Activated naive CD4-positive, alpha-beta T cell treated with anti-CD3 and anti-CD28 coated beads for 36 hours (primary cell): ENCODE measurements at regions of chr16 and their contacts with region 1.

Region 1: DNA sequence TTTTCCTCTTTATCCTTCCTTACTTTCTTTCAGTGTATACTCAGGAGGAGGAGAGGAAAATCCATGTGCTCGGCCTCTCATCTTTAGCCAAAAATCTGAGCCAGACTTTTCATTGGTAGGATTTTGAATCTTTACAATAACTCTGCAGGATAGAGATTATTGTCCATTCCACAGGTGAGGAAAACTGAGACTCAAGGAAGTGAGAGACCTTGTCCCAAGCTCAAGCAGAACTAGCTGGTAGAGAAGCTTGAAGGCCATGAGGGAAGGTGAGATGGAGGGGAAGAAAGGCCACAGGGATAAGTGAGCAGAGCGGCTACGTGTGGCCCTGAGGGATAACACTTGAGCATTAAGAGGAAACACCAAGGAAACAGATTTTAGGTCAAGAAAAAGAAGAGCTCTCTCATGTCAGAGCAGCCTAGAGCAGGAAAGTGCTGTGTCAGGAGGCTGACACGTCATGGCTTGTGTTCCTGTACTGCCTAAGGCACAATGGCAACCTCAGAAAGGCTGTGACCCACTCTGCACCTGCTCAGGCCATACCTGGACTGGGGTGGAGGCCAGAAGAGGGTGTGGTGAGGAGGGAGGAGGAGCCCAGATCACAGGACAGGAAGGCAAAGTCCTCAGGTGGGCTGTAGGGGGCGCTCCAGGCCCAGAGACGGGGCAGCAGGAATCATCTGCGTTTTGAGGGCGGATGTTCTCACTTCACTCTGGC is 11.9 kb downstream of the MT4 start:
- DNase-seq: peak; percentile 95
- H3K4me3 Mint-ChIP-seq: no peak overlapping the region
- H3K27ac Mint-ChIP-seq: peak overlapping the region; percentile 30
- H3K4me1 Mint-ChIP-seq: peaks cover 4% of the 10 kb centered on the region
- H3K27me3 Mint-ChIP-seq: no peaks in the 10 kb centered on the region

Region 2: DNA sequence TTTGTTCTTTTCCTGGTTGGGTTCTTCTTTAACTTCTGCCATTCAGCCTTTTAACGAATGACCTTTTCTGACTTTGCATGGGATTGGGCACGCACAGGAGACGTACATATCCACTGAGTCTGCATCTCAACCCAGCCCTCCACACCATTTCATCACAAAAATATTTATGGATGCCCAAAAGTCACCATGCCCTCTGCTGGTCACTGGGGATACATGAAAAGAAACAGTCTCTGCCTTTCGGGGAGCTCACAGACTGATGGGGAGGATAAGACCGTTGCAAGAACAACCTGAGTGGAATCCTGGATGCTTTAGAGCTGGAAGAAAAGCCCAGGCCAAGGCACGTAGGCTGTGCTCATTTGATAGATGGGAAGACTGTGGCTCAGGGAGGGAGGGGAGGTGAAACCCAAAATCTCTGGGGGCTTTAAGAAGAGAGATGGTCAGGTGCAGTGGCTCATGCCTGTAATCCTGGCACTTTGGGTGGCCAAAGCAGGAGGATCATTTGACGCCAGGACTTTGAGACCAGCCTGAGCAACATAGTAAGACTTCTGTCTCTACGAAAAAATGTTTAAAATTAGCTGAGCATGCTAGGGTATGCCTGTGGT is 23.8 kb after region 1 on chr16:
- CTCF ChIA-PET with region 1: interaction called, 8 read pairs
- intact Hi-C with region 1: loop called (anchors 1 kb)
- DNase-seq: peak; percentile 44
- H3K4me3 Mint-ChIP-seq: no peak overlapping the region
- H3K27ac Mint-ChIP-seq: no peak overlapping the region
- H3K4me1 Mint-ChIP-seq: peaks cover 4% of the 10 kb centered on the region
- H3K27me3 Mint-ChIP-seq: peaks cover 5% of the 10 kb centered on the region

Region 3: DNA sequence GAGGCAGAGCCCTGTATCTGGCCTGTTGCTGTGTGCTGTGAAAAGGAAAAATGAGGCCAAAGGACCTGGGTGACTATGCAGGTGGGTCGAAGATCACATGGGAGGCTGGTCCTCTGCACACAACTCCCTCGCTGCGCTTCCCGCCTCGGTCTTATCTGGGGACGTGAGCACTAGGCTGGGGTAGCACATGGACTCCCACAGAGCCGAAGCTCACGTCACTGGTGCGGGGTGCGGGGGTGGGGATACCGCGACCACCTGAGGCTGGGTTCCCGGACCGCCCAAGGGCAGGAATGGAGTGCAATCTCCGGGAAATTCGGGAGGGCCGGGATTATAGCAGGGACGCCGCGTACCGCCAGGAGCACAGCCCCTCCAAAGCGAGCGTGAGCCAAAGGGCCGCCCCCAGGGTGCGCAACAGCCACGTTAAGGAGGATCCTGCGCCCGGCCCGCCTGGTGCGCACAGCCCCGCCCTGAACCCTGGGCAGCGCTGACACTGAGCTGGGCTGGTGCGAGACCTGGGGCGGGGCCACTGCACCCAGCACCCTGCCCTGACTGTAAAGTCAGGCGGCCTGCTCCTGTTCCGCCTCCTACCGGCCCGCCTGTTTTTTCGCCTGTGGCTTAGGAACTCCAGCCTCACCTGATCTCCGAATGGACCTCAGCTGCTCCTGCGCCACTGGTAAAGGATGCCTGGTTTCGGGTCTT is 66.5 kb after region 1 on chr16:
- CTCF ChIA-PET with region 1: interaction called, 6 read pairs
- intact Hi-C with region 1: loop called (anchors 1 kb)
- DNase-seq: peak; percentile 87
- H3K4me3 Mint-ChIP-seq: peak overlapping the region; percentile 46
- H3K27ac Mint-ChIP-seq: peak overlapping the region; percentile 9
- H3K4me1 Mint-ChIP-seq: peaks cover 21% of the 10 kb centered on the region
- H3K27me3 Mint-ChIP-seq: peaks cover 40% of the 10 kb centered on the region

Region 4: DNA sequence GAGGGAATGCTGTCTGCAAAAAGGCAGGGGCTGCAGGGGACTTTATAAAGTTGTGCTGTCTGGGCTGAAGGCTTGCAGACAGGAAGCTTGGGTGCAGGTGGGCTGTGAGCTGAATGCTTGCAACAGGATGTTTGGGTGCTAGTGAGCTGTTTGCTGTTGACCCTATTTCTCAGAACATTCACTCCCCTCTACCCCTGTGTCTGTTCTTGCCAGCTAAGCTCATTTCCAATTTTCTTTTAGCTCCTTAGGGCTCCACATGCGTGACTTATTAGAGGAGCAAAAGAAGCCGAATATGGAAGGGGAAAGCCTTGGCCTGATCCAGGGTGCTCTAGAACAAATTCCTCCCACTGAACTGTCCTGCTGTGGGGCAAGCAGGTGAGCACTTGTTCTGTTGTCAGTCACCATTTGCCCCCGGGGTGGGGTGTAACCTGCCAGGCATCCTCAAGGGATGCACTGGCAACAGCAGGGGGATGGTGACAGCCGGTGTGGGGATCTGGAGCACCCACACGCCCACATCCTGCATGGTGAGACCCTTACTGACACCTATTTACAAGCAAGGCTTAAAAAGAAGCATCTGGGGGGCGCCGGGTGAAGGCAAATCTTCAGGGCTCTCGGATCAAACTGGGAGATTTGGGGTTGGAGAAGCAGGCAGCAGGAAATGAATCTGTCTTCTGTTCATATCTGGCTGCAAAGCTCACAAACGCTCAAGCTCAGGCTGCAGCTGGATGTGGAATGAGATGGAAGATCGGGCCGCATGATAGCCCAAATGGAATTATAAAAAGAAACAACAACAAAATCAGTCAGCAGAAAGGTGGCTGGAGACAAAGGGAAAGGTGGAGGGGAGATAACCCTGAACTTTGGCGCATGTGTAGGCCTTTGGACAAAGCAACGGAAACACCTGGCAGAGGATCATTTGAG is 132.0 kb after region 1 on chr16:
- CTCF ChIA-PET with region 1: interaction called, 126 read pairs
- intact Hi-C with region 1: no loop called
- DNase-seq: peak; percentile 38
- H3K4me3 Mint-ChIP-seq: peak overlapping the region; percentile 6
- H3K27ac Mint-ChIP-seq: peak overlapping the region; percentile 14
- H3K4me1 Mint-ChIP-seq: peaks cover 20% of the 10 kb centered on the region
- H3K27me3 Mint-ChIP-seq: no peaks in the 10 kb centered on the region

Region 5: GRCh38 chr16:56789360-56789759 is 212.6 kb after region 1 on chr16:
- CTCF ChIA-PET with region 1: interaction called, 4 read pairs
- intact Hi-C with region 1: loop called (anchors 1 kb)
- DNase-seq: peak; percentile 60
- H3K4me3 Mint-ChIP-seq: no peak overlapping the region
- H3K27ac Mint-ChIP-seq: no peak overlapping the region
- H3K4me1 Mint-ChIP-seq: no peaks in the 10 kb centered on the region
- H3K27me3 Mint-ChIP-seq: no peaks in the 10 kb centered on the region

Region 6: DNA sequence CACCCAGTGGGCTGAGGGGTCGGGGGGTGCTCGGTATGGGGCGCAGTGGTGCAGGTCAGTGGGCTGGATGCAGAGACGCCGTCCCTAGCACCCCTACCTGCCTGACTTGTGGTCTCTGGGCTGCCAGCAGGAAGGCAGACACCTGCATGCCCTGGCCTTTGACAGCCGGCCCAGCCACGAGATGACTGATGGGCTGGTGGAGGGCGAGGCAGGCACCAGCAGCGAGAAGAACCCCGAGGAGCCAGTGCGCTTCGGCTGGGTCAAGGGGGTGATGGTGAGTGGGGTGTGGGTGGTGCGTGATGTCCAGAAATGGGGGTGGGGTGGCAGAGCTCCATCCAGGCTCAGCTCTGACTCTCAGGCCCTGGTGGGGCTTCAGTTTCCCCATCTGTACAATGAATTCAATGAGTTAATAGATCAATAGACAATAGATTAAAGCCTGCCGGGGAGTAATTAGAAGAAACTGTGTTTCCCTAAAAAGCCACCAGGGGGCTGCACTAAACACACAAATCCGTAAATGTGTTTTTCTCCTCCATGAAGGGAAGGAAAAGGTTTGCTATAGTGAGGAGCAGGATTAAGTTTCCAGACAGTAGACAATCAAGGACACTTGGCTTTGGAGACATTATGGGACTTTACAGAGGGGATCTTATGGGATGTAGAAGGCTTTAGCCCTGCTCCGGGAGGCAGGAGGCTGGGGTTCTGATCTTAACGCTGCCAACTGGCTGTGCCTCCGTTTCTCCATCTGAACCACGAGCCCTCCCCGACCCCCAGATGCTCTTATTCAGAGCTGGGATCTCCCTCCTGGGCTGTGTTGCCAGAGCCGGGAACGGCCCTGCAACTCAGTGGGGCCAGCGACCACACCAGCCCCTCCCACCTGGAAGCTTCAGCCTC is 290.4 kb after region 1 on chr16:
- CTCF ChIA-PET with region 1: no interaction called
- intact Hi-C with region 1: loop called (anchors 5 kb)
- DNase-seq: peak; percentile 64
- H3K4me3 Mint-ChIP-seq: no peak overlapping the region
- H3K27ac Mint-ChIP-seq: no peak overlapping the region
- H3K4me1 Mint-ChIP-seq: peaks cover 15% of the 10 kb centered on the region
- H3K27me3 Mint-ChIP-seq: no peaks in the 10 kb centered on the region

Region 7: GRCh38 chr16:56931892-56932720 is 355.4 kb after region 1 on chr16 and contains the start of gene HERPUD1:
- CTCF ChIA-PET with region 1: no interaction called
- intact Hi-C with region 1: no loop called
- DNase-seq: peak; percentile 99
- H3K4me3 Mint-ChIP-seq: peak within 1 kb of the TSS; percentile 98
- H3K27ac Mint-ChIP-seq: peak within 1 kb of the TSS; percentile 98
- H3K4me1 Mint-ChIP-seq: peaks cover 40% of the 10 kb centered on the region
- H3K27me3 Mint-ChIP-seq: no peaks in the 10 kb centered on the region
- total RNA-seq, gene HERPUD1: 118 to 120 TPM